Activated T-helper 1 cell treated with anti-CD3 and anti-CD28 coated beads, Interleukin-12 subunit alpha, Interleukin-12 subunit beta, Interleukin-2, Interleukin-4 antibody, amounts not matched to agents 30 ng/mL and 10 ng/mL and 1 ng/mL, durations not matched to agents 14 hours and 24 hours and 36 hours (primary cell): ENCODE measurements at regions of chr20 and their contacts with region 1.

Region 1: DNA sequence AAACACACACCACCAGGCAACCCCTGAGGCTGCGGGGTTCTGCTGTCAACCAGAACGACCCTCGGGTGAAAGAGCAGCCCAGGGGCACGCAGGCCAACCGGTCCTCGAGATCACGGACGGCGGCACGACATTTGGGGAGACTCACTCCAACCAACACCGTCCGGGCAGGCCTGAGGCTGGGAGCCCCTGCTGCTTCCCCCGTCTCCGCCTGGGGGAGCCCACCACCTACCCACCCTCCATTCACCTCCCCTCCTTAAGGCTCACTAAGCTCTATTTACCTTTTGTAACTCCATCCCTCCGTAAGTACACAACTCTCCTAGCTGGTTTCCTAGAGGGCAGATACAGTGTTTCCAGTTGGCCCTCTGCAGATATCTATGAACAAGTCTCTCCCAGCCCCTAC is 971.3 kb upstream of the DEFB115 start:
- DNase-seq: no peak
- H3K4me3 Mint-ChIP-seq: no peak overlapping the region
- H3K27ac Mint-ChIP-seq: peak overlapping the region; percentile 19
- H3K4me1 Mint-ChIP-seq: peaks cover 63% of the 10 kb centered on the region
- H3K27me3 Mint-ChIP-seq: no peaks in the 10 kb centered on the region

Region 2: DNA sequence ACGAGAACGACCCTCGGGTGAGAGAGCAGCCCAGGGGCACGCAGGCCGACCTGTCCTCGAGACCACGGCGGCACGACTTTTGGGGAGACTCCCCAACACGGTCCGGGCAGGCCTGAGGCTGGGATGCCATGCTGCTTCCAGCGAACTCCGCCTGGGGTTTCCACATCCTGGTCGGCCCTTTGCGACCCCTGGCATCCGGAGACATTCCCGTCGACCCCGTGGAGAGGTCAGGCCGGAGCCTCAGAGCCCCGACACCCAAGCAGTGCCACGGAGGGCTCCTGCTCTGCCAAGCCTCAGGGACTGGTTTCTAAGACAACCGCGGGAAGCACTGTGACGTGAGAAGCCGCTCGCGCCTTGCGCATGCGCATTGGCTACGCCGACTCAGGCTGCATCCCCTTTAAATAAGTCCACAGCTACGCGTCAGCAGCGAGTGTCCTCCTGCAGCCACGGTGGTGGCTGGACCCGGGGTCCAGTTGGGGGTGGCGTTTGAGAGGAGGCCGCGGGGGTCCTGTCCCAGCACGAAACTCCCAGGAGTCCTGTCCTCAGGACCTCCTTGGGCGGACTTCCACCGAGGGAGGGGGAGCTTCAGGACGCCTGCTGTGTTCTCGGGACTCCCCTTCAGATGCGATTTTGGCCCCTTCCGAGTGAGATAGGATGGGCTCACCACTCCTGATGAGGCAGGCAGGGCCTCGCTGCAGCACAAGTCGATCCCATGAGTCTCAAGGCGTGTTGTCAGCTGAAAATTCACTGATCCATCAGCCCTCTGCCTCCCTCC is 118.0 kb before region 1 on chr20:
- intact Hi-C with region 1: loop called (anchors 10 kb)
- DNase-seq: peak; percentile 7
- H3K4me3 Mint-ChIP-seq: peak overlapping the region; percentile 37
- H3K27ac Mint-ChIP-seq: no peak overlapping the region
- H3K4me1 Mint-ChIP-seq: peaks cover 26% of the 10 kb centered on the region
- H3K27me3 Mint-ChIP-seq: peaks cover 1% of the 10 kb centered on the region

Region 3: DNA sequence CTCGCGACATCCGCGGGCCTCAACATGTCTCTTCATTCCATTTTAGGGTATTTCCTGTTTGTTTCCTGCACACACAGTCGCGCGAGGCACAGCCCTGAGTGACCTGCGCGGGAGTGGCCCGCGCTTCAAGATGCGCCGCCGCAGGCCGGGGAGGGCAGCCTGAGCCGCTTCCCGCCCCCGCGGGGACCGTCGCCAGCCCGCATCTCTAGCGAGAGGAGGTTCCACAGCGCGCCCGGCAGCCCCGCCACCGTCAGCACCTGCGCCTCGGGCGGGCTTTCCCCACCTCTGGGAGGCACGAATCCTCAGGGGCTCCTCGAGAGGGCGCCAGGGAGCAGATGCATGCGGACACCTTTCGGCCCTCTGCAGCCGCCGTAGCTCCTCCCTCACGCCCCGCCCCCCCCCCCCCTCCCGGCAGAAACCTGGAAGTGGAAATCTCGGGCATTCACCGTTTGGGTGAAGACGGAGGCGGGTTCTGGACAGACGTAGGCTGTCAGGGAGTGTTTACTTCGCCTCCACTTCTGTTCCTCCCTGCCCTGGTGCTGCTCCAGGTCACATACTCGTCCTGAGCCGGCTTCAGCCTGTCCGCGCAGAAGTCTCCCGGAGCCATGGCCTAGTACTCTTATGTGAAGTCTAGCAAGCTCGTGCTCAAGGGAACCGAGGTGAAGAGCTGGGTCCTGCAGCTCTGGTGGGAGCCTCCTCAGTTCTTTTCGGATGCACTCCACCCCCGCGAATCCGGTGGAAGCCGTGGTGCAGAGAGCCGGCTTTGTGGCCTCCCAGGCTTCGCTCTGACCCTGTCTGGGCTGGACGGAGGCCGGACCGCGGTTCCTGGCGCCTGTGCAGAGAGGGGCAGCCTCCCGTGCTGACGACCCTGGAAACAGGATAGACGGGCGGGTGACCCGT is 90.9 kb after region 1 on chr20:
- intact Hi-C with region 1: loop called (anchors 2 kb)
- DNase-seq: peak; percentile 88
- H3K4me3 Mint-ChIP-seq: peak overlapping the region; percentile 90
- H3K27ac Mint-ChIP-seq: peak overlapping the region; percentile 91
- H3K4me1 Mint-ChIP-seq: peaks cover 46% of the 10 kb centered on the region
- H3K27me3 Mint-ChIP-seq: no peaks in the 10 kb centered on the region

Region 4: DNA sequence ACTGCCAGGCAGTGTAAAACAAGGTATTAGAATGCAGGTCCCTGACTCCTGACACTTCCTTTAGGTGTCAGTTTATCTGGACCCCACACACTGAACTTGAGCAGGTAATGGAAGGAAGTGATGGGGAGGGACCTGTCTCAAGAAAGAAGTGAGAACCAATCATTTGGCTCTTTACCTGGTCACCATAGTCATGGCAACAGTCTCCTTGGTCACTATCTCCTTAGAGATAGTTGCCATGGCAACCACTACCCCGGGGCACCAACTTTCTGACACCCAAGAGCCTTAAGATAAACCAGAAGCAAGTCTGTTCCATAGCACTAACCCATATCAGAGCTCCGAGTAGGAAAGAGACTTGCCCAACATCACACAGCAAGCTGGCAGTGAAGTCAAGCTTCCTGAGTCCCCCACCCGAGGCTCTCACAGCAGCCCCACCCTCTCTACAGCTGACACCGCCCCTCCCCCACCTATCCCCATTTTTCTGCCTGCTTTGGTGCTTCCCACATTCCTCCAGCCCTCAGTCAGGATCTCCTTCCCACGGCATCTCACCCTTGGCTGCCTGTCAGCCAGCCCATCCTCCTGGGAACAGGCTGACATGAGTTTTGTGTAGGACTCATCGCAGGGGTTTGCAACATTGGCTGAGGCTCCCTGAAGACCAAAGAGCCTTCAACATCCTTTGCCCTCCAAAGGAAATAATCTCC is 1211.8 kb after region 1 on chr20:
- intact Hi-C with region 1: no loop called
- DNase-seq: no peak
- H3K4me3 Mint-ChIP-seq: no peak overlapping the region
- H3K27ac Mint-ChIP-seq: no peak overlapping the region
- H3K4me1 Mint-ChIP-seq: no peaks in the 10 kb centered on the region
- H3K27me3 Mint-ChIP-seq: peaks cover 9% of the 10 kb centered on the region